ENCODE measurements at regions of chr9 and their contacts with region 1.

Region 1: GRCh38 chr9:136267261-136268111 is 21.9 kb upstream of the QSOX2 start:
- DNase-seq: peak; percentile 72
- ATAC-seq: peak; percentile 97
- H3K4me3 Mint-ChIP-seq: peak overlapping the region; percentile 80
- H3K27ac Mint-ChIP-seq: peak overlapping the region; percentile 70
- H3K4me1 Mint-ChIP-seq: peaks cover 11% of the 10 kb centered on the region
- H3K27me3 Mint-ChIP-seq: no peaks in the 10 kb centered on the region
- CTCF ChIP-seq: no peak

Region 2: GRCh38 chr9:136045971-136046920 is 221.2 kb before region 1 on chr9:
- CTCF ChIA-PET with region 1: no interaction called
- POLR2A ChIA-PET with region 1: no interaction called
- intact Hi-C with region 1: no loop called
- DNase-seq: no peak
- ATAC-seq: no peak
- H3K4me3 Mint-ChIP-seq: no peak overlapping the region
- H3K27ac Mint-ChIP-seq: no peak overlapping the region
- H3K4me1 Mint-ChIP-seq: peaks cover 3% of the 10 kb centered on the region
- H3K27me3 Mint-ChIP-seq: no peaks in the 10 kb centered on the region
- CTCF ChIP-seq: no peak

Region 3: DNA sequence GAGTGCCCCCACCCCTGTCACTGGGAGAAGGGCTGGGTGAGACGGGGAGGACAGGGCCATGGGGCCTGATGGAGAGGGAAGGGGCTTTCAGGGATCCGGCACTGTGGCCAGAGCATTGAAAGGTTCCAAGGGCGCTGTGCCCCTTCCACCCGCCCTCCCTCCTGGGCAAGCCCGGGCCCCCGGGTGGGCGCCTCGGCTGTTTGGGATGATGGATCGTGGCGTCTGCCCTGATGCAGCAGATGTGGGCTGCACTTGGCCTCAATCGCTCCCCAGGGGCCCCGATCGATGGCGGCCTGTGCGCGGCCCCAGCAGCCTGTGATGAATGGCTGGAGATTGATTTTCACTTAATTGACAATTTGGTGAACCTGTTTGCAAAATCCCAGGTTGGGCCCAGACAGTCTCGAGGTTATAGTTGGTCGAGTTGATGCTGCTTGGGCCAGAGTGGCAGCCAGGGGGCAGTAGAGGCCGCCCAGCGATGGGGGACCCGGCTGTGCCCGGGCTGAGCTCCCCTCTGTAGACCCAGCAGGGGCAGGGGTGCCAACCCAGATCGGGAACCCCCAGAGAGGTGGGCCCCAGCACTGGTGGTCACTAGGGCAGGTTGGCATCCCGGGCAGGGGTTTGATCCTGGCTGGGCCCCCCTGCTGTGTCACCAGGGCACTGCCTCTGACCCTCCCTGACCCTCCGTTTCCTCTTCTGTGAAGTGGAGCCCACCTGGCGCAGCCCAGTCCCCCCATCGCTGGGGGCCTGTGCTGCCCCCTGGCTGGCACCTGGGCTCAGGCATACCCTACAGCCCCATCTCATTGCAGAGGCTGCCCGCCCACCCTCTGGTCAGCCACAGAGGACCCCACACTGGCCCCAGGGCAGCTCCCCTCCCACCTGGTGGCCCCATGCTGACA is 97.2 kb before region 1 on chr9:
- CTCF ChIA-PET with region 1: interaction called, 15 read pairs
- POLR2A ChIA-PET with region 1: interaction called, 4 read pairs
- intact Hi-C with region 1: loop called (anchors 1 kb)
- DNase-seq: peak; percentile 70
- ATAC-seq: peak; percentile 99
- H3K4me3 Mint-ChIP-seq: no peak overlapping the region
- H3K27ac Mint-ChIP-seq: no peak overlapping the region
- H3K4me1 Mint-ChIP-seq: peaks cover 6% of the 10 kb centered on the region
- H3K27me3 Mint-ChIP-seq: peaks cover 16% of the 10 kb centered on the region
- CTCF ChIP-seq: peak; percentile 33

Region 4: GRCh38 chr9:136372561-136373299 is 105.2 kb after region 1 on chr9:
- CTCF ChIA-PET with region 1: no interaction called
- POLR2A ChIA-PET with region 1: no interaction called
- intact Hi-C with region 1: no loop called
- DNase-seq: no peak
- ATAC-seq: peak; percentile 27
- H3K4me3 Mint-ChIP-seq: no peak overlapping the region
- H3K27ac Mint-ChIP-seq: no peak overlapping the region
- H3K4me1 Mint-ChIP-seq: peaks cover 9% of the 10 kb centered on the region
- H3K27me3 Mint-ChIP-seq: no peaks in the 10 kb centered on the region
- CTCF ChIP-seq: no peak